Activated CD4-positive, alpha-beta memory T cell treated with anti-CD3 and anti-CD28 coated beads for 36 hours (primary cell): ENCODE measurements at regions of chr9 and their contacts with region 1.

Region 1: DNA sequence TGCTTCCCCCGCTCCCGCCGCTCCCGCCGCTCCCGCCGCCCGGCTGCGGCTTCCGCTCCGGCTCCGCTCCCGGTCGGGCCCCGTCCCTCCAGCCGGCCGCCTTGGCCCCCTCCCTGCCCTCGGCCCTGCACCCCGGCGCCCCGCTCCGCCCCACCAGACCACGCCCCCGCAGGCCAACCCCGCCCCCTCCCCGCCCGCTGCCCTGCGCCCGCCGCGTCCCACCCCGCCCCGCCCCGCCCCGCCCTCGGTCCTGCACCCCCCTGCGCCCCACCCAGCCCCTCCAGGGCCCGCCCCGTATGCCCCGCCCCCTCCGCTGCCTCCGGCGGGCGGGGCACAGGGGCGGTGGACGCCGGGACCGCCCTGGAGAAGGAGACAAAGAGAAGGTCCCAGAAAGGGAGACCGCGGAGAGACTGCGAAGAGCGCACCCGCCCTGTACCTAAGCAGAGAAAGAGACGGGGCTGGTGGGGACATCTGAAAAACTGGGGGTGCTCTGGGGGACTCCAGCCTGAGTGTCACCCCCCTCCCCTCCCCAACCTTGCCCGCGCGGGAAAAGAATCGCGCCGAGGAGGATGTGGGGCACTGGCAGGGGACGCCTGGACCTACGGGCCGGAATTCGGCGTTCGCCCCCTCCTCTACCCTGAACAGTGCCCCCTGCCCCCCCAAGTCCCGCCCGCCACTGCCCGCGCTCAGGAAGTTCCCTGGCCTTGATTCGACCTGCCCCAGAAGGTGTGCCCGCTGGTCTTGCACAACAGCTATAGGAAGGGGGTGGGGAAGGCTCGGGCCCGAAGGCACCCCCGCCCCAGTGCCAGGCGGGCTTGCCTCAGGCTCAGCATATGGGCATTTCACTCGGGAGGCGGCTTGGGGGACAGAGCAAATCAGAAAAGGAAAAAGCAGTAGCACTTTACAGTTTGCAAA is 42.8 kb upstream of the STXBP1 start:
- DNase-seq: peak; percentile 85
- H3K4me3 Mint-ChIP-seq: peak overlapping the region; percentile 81
- H3K27ac Mint-ChIP-seq: peak overlapping the region; percentile 84
- H3K4me1 Mint-ChIP-seq: peaks cover 35% of the 10 kb centered on the region
- H3K27me3 Mint-ChIP-seq: no peaks in the 10 kb centered on the region

Region 2: DNA sequence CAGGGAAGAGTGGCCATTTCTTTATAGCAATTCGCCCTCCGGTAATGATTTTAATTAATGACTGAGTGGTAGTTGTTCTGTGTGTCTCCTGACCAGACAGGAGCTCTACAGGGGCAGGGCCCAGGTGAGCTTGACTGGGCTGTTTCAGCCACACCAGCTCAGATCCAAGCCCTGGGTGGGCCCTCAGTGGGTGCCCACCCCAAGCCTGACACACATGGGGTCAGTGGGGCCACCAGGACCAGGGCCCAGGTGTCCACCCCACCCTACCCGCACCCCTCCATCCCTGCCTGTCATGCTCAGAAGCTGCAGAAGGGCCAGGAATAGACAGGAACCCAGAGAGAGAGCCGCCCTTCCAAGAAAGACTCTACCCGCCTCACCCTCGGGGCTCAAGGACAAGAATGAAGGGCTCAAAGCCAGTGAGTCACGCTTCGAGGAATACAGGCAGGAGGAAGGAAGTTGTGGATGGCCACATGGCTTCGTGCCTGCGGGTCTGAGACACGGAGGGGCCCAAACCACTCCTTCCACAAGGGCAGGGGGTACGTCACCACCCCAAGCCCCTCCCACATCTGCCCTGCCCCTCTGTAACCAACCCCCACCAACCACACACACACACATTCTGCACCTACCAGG is 13.3 kb before region 1 on chr9:
- CTCF ChIA-PET with region 1: no interaction called
- POLR2A ChIA-PET with region 1: interaction called, 4 read pairs
- intact Hi-C with region 1: loop called (anchors 2 kb)
- DNase-seq: peak; percentile 82
- H3K4me3 Mint-ChIP-seq: peak overlapping the region; percentile 32
- H3K27ac Mint-ChIP-seq: peak overlapping the region; percentile 82
- H3K4me1 Mint-ChIP-seq: peaks cover 38% of the 10 kb centered on the region
- H3K27me3 Mint-ChIP-seq: no peaks in the 10 kb centered on the region

Region 3: GRCh38 chr9:127598839-127599548 is 29.8 kb after region 1 on chr9:
- CTCF ChIA-PET with region 1: no interaction called
- POLR2A ChIA-PET with region 1: no interaction called
- intact Hi-C with region 1: no loop called
- DNase-seq: no peak
- H3K4me3 Mint-ChIP-seq: no peak overlapping the region
- H3K27ac Mint-ChIP-seq: no peak overlapping the region
- H3K4me1 Mint-ChIP-seq: no peaks in the 10 kb centered on the region
- H3K27me3 Mint-ChIP-seq: no peaks in the 10 kb centered on the region